Activated CD8-positive, alpha-beta T cell treated with anti-CD3 and anti-CD28 coated beads, Interleukin-2, amount 10 ng/mL, durations not matched to agents 7 days and 5 days (primary cell): ENCODE measurements at regions of chr5 and their contacts with region 1.

Region 1: DNA sequence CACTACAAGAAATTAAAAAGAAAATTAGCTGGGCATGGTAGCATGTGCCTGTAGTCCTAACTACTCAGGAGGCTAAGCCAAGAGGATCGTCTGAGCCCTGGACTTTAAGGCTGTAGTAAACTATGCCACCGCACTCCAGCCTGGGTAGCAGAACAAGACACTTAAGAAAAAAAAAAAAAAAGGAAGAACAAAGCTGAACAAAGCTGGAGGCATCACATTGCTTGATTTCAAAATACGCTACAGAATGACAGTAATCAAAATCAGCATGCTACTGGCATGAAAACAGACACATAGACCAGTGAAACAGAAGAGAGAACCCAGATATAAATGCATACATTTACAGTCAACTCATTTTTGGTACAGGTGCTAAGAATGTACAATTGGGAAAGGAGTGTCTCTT is 14.5 kb upstream of the OTULIN start:
- DNase-seq: no peak
- ATAC-seq: no peak
- H3K4me3 Mint-ChIP-seq: no peak overlapping the region
- H3K27ac Mint-ChIP-seq: no peak overlapping the region
- H3K4me1 Mint-ChIP-seq: peaks cover 16% of the 10 kb centered on the region
- H3K27me3 Mint-ChIP-seq: peaks cover 25% of the 10 kb centered on the region

Region 2: DNA sequence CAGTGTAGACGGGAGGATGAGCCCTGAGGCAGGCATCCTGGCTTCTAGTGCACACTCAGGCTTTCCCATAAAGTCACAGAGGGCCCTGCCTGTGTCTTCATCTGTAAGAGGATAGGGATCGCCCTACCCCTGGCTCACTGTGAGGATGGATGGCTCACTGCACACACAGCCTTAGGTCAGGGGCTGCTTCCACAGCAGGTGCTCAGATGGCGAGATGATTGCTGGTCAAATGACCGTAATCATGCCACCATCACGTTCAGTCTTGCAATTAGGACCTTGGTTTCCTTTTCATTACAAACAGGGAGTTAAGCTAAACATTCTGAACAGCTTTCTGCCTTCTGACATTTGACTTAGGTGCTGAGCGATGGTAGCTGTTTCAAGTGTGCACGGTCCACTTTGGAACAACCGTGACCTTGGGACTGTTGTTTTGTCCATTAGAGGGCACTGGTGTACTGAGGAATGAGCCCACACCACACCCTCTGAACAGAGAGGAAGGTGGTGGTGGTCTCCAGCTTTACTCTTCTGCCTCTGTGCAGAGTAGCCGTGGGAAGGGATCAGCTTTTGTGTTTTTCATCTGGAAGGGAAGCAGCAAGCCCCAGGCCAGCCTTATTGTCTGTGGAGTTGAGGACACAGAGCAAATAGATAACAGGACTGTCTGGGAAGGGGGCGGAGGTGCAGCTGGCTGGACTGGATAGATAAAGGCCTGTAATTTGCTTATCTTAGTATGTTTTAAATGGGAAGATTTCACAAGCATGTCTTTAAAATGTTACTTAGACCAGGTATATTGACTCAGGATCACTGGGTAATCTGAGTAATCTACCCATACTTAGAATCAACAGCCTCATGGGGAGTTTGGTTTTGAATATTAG is 323.8 kb before region 1 on chr5:
- CTCF ChIA-PET with region 1: interaction called, 16 read pairs
- POLR2A ChIA-PET with region 1: no interaction called
- DNase-seq: no peak
- ATAC-seq: no peak
- H3K4me3 Mint-ChIP-seq: no peak overlapping the region
- H3K27ac Mint-ChIP-seq: no peak overlapping the region
- H3K4me1 Mint-ChIP-seq: peaks cover 8% of the 10 kb centered on the region
- H3K27me3 Mint-ChIP-seq: peaks cover 10% of the 10 kb centered on the region

Region 3: DNA sequence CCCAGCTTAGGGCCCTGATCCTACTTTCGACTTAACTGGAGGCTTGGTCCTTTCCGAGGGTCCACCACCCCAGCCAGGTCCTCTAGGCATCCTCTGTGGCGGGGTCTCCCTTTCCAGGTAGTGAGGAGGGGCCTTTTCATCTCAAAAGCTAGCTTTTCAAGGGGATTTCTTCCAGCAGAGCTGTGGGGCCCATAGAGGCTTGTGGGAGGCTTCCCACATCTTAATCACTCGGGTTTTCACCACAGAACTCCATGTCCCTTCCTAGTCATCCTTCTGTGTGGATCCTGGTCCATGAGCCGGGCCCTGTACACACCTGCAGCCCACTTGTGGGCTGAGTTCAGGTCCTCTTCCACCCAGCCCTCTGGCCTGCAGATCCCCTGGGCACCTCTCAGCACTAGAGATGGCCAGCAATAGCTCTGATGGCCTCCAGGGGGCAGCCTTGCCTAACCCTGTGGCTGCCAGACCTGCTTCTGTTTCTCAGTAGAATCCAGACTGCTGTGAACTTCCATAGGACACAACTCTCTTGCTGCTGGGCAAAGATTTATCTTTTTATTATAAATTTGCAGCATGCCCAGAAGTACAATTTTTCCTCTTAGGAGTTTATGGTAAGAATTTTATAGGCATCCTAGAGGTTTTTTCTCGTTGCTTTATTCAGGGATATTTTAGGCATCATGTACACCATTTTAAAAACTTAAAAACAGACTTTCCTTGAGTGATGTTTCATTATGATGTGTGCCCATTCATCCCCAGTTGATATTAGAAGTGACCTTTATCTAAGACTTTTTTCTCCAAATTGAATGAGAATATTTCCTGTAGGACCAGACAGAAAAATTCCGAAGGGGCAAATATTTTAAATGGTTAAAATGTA is 298.0 kb before region 1 on chr5:
- CTCF ChIA-PET with region 1: interaction called, 59 read pairs
- POLR2A ChIA-PET with region 1: no interaction called
- DNase-seq: peak; percentile 74
- ATAC-seq: peak; percentile 97
- H3K4me3 Mint-ChIP-seq: no peak overlapping the region
- H3K27ac Mint-ChIP-seq: no peak overlapping the region
- H3K4me1 Mint-ChIP-seq: peaks cover 10% of the 10 kb centered on the region
- H3K27me3 Mint-ChIP-seq: peaks cover 8% of the 10 kb centered on the region

Region 4: DNA sequence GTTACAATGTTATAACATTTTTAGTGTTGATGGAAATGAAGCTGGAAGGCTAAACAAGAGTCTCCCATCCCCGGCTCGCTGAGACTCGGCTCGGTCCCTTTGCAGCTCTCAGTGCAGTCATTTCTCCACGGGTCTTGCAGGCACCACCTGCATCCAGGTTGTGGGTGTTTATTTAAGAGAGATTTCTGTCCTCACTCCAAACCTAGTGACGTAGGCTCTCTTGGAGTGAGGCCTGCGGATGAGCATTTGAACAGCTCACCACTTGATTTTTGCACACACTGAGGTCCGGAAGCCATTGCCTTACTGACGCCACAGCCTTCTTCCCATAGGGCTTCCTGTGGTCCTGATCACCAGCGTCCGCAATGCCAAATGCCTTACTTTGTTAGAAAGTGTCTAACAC is 266.1 kb before region 1 on chr5:
- CTCF ChIA-PET with region 1: interaction called, 45 read pairs
- POLR2A ChIA-PET with region 1: no interaction called
- DNase-seq: no peak
- ATAC-seq: no peak
- H3K4me3 Mint-ChIP-seq: no peak overlapping the region
- H3K27ac Mint-ChIP-seq: no peak overlapping the region
- H3K4me1 Mint-ChIP-seq: peaks cover 14% of the 10 kb centered on the region
- H3K27me3 Mint-ChIP-seq: peaks cover 5% of the 10 kb centered on the region

Region 5: DNA sequence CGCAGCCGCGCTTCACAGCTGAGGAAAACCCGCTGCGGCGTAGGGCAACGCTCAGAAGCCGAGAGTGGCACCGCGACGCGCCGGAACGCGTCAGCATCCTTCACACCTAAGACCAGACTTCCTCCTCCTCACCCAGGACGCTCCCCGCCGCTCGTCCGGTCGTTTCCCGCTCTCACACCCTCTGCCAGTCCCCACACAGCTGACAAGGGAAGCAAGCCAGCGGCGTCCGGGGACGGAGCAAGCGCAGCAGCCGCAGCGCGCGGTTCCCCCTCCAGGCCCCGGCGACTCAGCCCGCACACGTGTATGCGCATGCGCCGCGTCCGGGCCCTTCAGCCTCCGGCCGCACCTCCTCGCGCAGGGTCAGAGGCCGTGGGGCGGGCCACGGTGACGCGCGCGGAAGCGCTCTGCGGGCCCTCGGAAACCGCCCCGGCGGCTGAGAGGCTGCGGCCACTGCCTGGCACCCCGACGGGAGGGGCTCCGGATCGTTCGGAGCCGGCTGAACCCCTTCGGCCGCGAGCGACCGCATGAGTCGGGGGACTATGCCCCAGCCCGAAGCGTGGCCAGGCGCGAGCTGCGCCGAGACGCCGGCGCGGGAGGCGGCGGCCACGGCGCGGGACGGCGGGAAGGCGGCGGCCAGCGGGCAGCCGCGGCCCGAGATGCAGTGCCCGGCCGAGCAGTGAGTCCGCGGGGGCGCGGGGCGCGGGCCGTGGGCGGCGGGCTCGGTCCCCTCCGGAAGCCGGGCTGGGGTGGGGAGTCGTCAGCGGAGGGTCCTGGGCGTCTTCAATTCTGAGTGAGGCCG is 14.4 kb after region 1 on chr5 and contains the start of gene OTULIN:
- CTCF ChIA-PET with region 1: interaction called, 66 read pairs
- POLR2A ChIA-PET with region 1: no interaction called
- DNase-seq: peak; percentile 91
- ATAC-seq: peak; percentile 73
- H3K4me3 Mint-ChIP-seq: peak within 1 kb of the TSS; percentile 94
- H3K27ac Mint-ChIP-seq: peak within 1 kb of the TSS; percentile 98
- H3K4me1 Mint-ChIP-seq: peaks cover 73% of the 10 kb centered on the region
- H3K27me3 Mint-ChIP-seq: no peaks in the 10 kb centered on the region
- total RNA-seq, gene OTULIN: 71.2 to 80.7 TPM